Naive thymus-derived CD4-positive, alpha-beta T cell (primary cell): ENCODE measurements at regions of chr1 and their contacts with region 1.

Region 1: DNA sequence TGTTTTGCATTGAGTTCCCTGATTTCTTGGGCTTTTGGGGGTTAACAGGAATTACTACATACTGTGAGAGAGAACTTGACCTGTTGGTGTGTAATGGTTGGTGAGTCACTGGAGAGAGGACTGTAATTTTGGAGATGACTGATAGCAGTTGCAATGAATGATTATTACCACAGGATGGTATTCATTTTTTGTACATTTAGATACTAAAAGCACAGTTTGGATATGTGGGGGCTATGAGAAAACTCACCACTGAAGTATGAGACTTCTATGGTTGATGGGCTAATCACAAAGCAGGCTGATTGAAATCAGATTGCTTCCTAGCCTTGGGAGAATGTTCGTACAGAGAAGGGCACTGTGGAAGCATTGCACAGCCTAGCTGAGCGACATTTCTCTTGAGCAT is 1571.3 kb upstream of the PRMT6 start:
- DNase-seq: no peak
- ATAC-seq: no peak
- H3K4me3 ChIP-seq: no peak overlapping the region
- H3K4me3 Mint-ChIP-seq: no peak overlapping the region
- H3K27ac ChIP-seq: no peak overlapping the region
- H3K27ac Mint-ChIP-seq: no peak overlapping the region
- H3K4me1 ChIP-seq: no peaks in the 10 kb centered on the region
- H3K4me1 Mint-ChIP-seq: no peaks in the 10 kb centered on the region
- H3K27me3 ChIP-seq: no peaks in the 10 kb centered on the region
- H3K27me3 Mint-ChIP-seq: no peaks in the 10 kb centered on the region

Region 2: DNA sequence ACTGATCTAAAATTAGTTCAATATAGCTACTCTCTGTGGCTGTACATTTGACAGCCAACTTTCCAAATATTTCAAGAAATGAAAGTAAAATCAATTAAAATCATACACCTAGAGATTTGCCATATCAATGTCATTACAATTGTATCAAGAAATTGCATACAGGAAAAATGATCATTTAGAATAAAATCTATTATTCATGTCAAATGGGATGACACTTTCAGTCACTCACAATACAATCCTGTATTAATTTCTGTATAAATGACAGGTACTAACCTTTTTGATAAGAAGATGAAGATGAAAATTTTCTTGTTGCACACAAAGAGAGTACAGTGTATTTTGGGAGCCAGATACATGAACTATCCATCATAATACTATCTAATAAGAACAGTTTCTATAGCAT is 17.7 kb before region 1 on chr1:
- CTCF ChIA-PET with region 1: no interaction called
- POLR2A ChIA-PET with region 1: no interaction called
- intact Hi-C with region 1: loop called in 1 of 2 experiments (anchors 1 kb)
- DNase-seq: no peak
- ATAC-seq: no peak
- H3K4me3 ChIP-seq: no peak overlapping the region
- H3K4me3 Mint-ChIP-seq: no peak overlapping the region
- H3K27ac ChIP-seq: no peak overlapping the region
- H3K27ac Mint-ChIP-seq: no peak overlapping the region
- H3K4me1 ChIP-seq: no peaks in the 10 kb centered on the region
- H3K4me1 Mint-ChIP-seq: no peaks in the 10 kb centered on the region
- H3K27me3 ChIP-seq: no peaks in the 10 kb centered on the region
- H3K27me3 Mint-ChIP-seq: no peaks in the 10 kb centered on the region

Region 3: GRCh38 chr1:106038260-106038659 is 553.1 kb after region 1 on chr1:
- CTCF ChIA-PET with region 1: no interaction called
- POLR2A ChIA-PET with region 1: no interaction called
- intact Hi-C with region 1: no loop called
- DNase-seq: no peak
- ATAC-seq: no peak
- H3K4me3 ChIP-seq: no peak overlapping the region
- H3K4me3 Mint-ChIP-seq: no peak overlapping the region
- H3K27ac ChIP-seq: no peak overlapping the region
- H3K27ac Mint-ChIP-seq: no peak overlapping the region
- H3K4me1 ChIP-seq: no peaks in the 10 kb centered on the region
- H3K4me1 Mint-ChIP-seq: no peaks in the 10 kb centered on the region
- H3K27me3 ChIP-seq: no peaks in the 10 kb centered on the region
- H3K27me3 Mint-ChIP-seq: no peaks in the 10 kb centered on the region